ENCODE measurements at regions of chr12 and their contacts with region 1.

Region 1: GRCh38 chr12:118404876-118405521 is 28.6 kb downstream of the SUDS3 start:
- DNase-seq: peak; percentile 72
- ATAC-seq: peak in 1 of 2 donors; percentile 47

Region 2: DNA sequence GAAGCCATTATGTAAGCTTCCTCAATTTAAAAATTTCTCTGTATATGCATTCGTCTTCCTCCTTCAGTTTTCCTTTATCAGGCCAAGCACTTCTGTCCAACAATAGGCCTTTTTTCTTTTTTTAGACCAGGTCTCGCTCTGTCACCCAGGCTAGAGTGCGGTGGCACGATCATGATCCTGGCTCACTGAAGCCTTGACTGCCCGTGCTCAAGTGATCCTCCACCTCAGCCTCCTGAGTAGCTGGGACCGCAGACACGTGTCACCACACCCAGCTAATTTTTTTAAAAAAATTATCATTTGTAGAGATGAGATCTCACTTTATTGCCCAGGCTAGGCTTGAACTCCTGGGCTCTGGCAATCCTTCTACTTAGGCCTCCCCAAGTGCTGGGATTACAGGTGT is 58.1 kb before region 1 on chr12:
- intact Hi-C with region 1: no loop called
- DNase-seq: no peak
- ATAC-seq: no peak

Region 3: GRCh38 chr12:118608770-118609344 is 203.9 kb after region 1 on chr12:
- intact Hi-C with region 1: loop called in 1 of 2 experiments (anchors 5 kb)
- DNase-seq: no peak
- ATAC-seq: no peak

Region 4: DNA sequence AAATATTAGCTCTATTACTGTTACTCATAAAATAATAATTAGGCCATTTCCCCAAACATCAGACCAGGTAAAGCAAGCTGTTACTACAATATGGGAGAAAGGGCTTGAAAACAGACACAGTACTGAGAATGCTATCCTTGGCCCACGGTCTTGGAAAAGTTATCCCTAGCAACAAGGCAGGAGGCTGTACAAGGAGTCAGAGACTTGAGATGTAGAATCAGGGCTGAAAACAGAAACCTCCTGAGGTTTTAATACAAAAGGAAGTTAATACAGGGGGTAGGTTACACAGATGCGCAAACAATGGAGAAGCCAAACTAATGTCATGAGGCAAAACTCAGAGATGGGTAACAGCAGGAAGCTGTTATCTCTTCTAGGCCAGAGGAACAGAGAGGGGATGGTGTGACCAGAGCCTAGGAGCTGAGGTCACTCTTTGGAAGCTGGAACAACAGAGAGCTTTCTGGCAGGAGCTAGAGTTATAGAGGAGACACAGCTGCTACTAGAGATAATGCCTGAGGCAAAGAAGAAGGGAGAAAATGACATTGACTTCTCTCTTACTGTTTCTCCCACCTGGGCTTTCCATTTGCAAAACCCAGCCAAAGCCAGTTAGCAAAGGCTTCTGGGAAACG is 220.2 kb after region 1 on chr12:
- intact Hi-C with region 1: loop called in 1 of 2 experiments (anchors 10 kb)
- DNase-seq: no peak
- ATAC-seq: peak in 1 of 2 donors; percentile 84

Region 5: GRCh38 chr12:118850244-118850825 is 445.3 kb after region 1 on chr12:
- intact Hi-C with region 1: loop called in 1 of 2 experiments (anchors 10 kb)
- DNase-seq: no peak
- ATAC-seq: no peak

Region 6: GRCh38 chr12:119036878-119037825 is 632.2 kb after region 1 on chr12:
- intact Hi-C with region 1: loop called in 1 of 2 experiments (anchors 10 kb)
- DNase-seq: no peak
- ATAC-seq: no peak

Region 7: DNA sequence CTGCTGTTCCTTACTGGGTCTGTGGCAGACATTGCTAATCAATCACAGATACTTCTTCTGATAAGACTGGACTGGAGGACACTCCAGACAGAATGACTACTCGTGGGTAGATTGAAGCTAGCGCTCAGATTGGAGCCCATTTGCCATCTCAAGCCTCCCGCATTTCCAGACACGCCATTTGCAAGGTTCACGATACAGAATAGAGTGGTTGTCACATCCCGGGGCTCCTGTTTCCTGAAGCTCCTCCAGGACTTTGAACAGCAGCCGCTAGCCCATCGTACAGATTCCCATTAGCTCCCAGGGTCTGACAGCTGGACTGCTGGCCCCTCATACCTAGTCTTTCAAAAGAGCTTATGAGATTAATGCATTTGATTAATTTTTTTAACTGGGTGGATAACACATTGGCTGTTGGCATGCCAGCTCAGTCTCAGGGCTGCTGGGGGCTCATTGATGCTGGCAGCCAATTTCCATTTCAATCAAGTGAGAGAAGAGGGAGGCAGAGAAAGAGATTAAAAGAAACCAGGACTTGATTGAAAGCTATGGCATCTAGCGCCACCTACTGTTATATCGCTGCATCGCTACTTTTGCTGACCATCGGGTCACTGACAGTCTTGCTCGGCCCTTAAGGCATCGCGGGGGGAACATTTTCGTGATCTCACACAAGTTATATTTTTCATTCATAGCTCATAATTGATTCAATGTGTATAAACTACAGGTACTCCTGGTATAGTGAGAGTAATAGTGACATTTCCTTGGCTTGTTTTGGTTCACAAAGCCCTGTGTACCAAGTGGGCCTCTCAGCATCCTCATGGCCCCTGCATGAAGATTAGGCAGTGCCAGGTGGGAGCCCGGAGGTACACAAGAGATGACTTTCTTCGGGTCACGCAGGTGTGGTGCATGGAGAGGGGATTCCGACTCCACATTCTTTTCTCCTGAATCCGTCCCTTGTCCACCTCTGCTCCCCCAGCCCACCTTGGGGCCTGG is 1008.1 kb after region 1 on chr12:
- intact Hi-C with region 1: loop called in 1 of 2 experiments (anchors 10 kb)
- DNase-seq: peak; percentile 61
- ATAC-seq: peak; percentile 70 to 75